ENCODE measurements at regions of chr11 and their contacts with region 1.

Region 1: DNA sequence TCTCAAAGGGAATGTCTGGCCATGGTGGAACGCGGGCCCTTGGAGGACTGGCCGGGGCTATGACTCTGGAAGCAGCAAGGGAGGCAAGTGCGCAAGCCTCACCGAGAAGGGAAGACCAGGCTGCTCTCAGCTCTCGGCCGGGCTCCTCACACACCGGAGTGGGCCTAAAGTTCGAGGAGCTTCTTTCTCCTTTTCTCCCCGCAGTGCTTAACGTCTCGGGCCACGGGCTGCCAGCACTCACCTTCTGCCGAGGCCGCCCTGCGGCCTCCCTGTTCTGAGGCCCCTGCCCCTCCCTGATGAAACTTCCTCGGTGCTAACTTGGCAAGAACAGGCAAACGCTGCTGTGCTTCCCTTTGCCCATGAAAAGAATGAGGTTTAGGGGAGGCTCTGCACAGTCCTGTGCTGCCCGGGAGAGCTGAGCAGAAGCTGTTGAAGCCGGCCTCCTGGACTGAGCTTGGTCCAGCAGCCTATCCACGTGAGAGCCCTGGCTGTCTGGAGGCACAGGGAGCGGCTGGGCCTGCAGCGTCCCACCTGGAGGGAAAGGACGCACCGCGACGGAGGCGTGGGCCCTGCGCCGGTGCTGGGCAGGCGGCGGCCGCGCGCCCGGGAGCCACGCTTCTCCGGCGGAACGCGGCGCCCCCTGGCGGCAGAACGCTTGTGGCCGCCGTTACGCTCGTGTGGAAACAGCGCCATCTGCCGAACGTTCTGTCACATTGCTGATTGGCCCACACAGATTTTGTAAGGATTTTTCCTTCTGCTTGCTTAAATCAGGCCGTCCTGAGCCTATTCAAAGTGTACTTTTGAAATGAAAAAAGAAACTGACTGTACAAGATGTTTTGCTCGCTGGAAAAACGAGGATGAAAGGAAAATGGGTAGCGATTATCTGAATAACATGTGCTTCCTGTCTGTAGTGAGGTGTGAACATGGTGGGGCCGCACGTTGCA is 65.0 kb upstream of the TMEM45B start:
- DNase-seq: peak; percentile 58 to 87 (median 73)
- ATAC-seq: peak in 3 of 4 donors; percentile 75 to 93 (median 91)
- H3K4me3 ChIP-seq: peak overlapping the region in 9 of 12 donors; percentile 3 to 37 (median 25)
- H3K27ac ChIP-seq: no peak overlapping the region
- H3K4me1 ChIP-seq: peaks cover 0 to 8% (median 2%) of the 10 kb centered on the region in 12 donors
- H3K27me3 ChIP-seq: peaks cover 0 to 25% (median 3%) of the 10 kb centered on the region in 9 donors
- CTCF ChIP-seq: peak in 11 of 12 donors; percentile 96 to 100 (median 100)
- POLR2A ChIP-seq: no peak

Region 2: DNA sequence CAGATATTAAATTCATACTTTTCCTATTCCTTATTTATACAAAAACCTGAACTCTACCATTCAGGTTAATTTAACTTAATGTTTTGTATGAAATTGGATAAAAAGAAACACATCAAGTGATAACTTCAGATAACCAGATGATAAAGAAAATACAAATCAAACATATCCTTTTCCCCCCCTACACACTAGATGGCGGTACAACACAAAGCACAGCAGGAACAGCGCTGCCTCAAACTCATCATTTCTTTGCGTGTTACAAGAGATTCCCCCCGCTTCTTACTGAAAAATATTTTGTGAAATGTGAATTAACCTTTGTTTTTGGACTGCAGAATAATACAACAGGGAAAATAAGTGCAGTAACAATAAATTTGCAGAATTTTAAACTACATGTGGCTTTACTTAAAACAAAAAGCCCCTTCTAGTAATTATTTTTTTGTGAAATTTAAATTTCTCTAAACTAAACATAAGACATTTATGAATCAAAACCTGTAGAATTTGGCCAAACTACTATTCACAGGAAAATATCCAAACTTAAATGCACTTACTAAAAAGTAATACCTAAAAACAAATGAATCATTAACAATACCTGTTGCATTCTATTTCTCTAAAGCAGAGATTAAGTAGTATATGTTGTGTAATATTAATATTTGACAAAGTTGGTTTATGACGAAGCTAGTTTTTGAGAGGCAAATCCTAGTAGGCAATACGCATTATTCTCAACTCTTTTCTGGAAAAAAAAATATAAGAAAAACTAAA is 632.8 kb before region 1 on chr11:
- intact Hi-C with region 1: loop called in 6 of 10 experiments (anchors 2 to 10 kb)
- DNase-seq: peak in 1 of 5 donors; percentile 27
- ATAC-seq: peak in 2 of 4 donors; percentile 59 to 61
- H3K4me3 ChIP-seq: no peak overlapping the region
- H3K27ac ChIP-seq: no peak overlapping the region
- H3K4me1 ChIP-seq: peaks cover 0 to 3% (median 0%) of the 10 kb centered on the region in 12 donors
- H3K27me3 ChIP-seq: no peaks in the 10 kb centered on the region
- CTCF ChIP-seq: peak; percentile 79 to 94 (median 86)
- POLR2A ChIP-seq: no peak

Region 3: GRCh38 chr11:129364143-129364654 is 386.4 kb before region 1 on chr11:
- intact Hi-C with region 1: loop called in 9 of 10 experiments (anchors 2 to 10 kb)
- DNase-seq: peak; percentile 65 to 86 (median 78)
- ATAC-seq: peak; percentile 93 to 98 (median 96)
- H3K4me3 ChIP-seq: peak overlapping the region in 1 of 12 donors; percentile 16
- H3K27ac ChIP-seq: no peak overlapping the region
- H3K4me1 ChIP-seq: peaks cover 0 to 6% (median 0%) of the 10 kb centered on the region in 12 donors
- H3K27me3 ChIP-seq: peaks cover 0 to 75% (median 18%) of the 10 kb centered on the region in 9 donors
- CTCF ChIP-seq: peak; percentile 85 to 98 (median 94)
- POLR2A ChIP-seq: no peak

Region 4: DNA sequence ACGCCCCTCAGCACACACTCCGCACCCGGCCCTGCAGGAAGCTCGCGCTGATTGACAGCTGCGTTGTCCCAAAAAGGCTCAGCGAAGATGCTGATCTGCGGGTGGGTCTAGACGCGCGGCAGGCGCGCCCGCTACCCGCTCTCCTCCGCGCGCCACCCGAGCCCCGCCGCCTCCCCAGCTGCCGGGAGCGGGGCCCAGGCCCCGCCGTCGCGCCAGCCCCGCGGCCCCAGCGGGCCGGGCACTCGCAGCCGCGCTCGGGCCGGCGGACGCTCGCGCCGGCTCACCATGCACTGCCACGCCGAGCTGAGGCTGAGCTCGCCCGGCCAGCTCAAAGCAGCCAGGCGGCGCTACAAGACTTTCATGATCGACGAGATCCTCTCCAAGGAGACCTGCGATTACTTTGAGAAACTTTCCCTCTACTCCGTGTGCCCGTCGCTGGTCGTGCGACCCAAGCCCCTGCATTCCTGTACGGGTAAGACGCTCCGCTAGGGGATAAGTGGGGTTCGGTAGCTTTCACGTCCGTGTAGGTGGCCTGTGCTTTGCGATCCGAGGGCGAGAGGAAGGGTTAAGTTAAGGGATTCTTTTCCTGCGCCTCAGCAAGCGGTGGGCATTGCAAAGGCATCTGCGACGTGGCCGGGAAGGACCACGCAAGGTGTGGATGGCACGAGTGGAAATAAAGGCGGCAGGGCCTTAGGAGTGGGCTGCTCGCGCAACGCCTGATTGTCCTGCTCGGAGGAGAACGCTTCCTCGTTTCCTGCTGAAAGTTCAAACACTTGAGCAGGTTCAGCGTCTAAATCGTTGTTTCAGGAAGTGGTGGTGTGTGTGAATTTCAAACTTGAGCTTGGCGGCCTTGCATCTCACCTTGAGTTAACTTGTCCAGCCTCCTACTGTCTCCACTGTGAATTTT is 374.6 kb before region 1 on chr11 and contains the start of gene BARX2:
- intact Hi-C with region 1: loop called in 1 of 10 experiments (anchors 5 kb)
- DNase-seq: peak in 1 of 5 donors; percentile 64
- ATAC-seq: peak in 3 of 4 donors; percentile 38 to 64 (median 41)
- H3K4me3 ChIP-seq: peak within 1 kb of the TSS in 11 of 12 donors; percentile 7 to 53 (median 31)
- H3K27ac ChIP-seq: no peak within 1 kb of the TSS
- H3K4me1 ChIP-seq: peaks cover 0 to 36% (median 22%) of the 10 kb centered on the region in 12 donors
- H3K27me3 ChIP-seq: peaks cover 44 to 98% (median 76%) of the 10 kb centered on the region in 9 donors
- CTCF ChIP-seq: peak in 6 of 12 donors; percentile 8 to 54 (median 34)
- POLR2A ChIP-seq: no peak
- total RNA-seq, gene BARX2: 0.12 to 0.72 TPM in 2 of 9 donors, not detected in the others

Region 5: GRCh38 chr11:129695575-129696308 is 54.9 kb before region 1 on chr11:
- intact Hi-C with region 1: loop called in 1 of 10 experiments (anchors 5 kb)
- DNase-seq: peak in 4 of 5 donors; percentile 23 to 65 (median 38)
- ATAC-seq: peak; percentile 67 to 82 (median 73)
- H3K4me3 ChIP-seq: peak overlapping the region in 10 of 12 donors; percentile 8 to 46 (median 38)
- H3K27ac ChIP-seq: no peak overlapping the region
- H3K4me1 ChIP-seq: peaks cover 0 to 5% (median 0%) of the 10 kb centered on the region in 12 donors
- H3K27me3 ChIP-seq: peaks cover 0 to 45% (median 2%) of the 10 kb centered on the region in 9 donors
- CTCF ChIP-seq: peak; percentile 37 to 66 (median 54)
- POLR2A ChIP-seq: no peak

Measured in heart left ventricle (tissue), 16 donors.